ENCODE measurements at regions of chr5 and their contacts with region 1.

Region 1: DNA sequence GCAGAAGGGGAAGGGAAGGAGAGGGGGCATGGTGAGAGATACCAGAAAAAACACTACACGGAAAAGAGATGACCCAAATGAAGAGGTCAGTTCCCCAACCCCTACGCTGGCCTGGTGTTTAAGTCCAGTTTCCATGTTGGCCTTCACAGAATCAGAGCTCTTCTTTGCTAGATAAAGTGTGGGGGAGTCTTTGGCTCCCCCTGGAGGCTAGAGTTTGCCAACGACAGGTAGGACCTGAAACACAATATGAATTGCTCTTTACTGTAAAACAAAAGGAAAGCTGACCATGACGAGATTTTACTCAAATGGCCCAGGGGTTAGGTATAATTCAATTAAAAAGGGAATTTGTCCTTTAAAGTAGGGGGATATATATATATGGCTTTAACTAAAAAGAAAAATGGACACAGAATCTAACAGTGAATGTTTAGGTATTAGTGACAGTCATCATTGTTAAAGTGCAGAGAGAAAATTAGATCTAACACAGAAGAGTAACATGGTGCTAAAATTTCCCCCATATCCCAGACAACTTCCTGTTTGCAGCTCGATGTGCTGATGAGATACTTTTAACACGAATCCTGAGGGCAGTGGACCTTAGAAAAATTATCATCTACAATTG is 92.0 kb downstream of the SV2C start:
- DNase-seq: peak; percentile 66

Region 2: GRCh38 chr5:75885849-75886598 is 289.1 kb before region 1 on chr5:
- CTCF ChIA-PET with region 1: interaction called, 11 read pairs
- POLR2A ChIA-PET with region 1: no interaction called
- DNase-seq: no peak

Region 3: DNA sequence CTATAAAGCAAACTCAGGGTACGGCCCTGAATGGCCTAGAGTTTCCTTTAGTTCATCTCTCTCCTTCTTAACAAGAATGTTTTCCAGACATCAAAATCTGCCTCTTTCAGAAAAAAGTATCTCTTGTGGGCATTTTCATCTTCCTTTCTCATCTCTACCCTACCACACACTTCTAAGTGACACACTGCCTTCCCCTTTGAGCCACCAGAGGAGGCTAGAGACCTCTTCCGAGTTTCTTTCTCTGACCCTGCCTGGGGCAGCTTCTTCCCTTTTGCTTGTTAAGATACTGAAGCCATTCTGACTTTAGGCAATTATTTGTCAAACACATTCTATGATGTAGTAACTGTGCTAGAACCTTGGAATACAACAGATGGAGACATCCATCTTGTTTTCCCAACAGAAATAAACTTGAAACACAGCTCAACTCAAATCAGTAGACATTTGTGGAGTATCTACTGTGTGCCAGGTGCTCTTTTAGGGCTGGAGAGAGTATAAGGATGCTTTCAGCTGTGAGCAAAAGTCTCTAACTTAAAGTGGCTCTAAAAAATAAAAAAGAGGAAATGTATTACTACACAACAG is 100.6 kb before region 1 on chr5:
- CTCF ChIA-PET with region 1: interaction called, 12 read pairs
- POLR2A ChIA-PET with region 1: no interaction called
- DNase-seq: peak; percentile 23

Region 4: DNA sequence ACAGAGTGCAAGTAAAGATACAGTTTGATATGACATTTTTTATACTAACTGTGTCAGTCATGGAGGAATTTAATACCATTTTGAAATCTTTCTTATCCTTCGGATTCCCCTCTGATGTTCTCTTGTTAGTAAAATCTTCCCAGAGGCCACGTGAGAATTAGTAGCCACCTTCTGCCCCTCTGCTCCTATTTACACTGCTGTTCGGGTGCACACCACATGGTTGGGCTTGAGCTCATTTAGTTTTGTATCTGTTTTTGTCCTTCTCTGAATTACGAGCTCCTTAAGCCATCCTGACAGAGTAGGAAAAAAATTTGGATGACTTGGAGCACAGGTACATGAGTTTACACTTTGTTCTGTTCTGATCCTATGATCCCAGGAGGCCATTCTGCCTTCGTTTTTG is 17.7 kb after region 1 on chr5:
- CTCF ChIA-PET with region 1: interaction called, 17 read pairs
- POLR2A ChIA-PET with region 1: no interaction called
- DNase-seq: no peak

Measured in HEK293T (cell line).